IMR-90 (cell line): ENCODE measurements at regions of chrX and their contacts with region 1.

Region 1: DNA sequence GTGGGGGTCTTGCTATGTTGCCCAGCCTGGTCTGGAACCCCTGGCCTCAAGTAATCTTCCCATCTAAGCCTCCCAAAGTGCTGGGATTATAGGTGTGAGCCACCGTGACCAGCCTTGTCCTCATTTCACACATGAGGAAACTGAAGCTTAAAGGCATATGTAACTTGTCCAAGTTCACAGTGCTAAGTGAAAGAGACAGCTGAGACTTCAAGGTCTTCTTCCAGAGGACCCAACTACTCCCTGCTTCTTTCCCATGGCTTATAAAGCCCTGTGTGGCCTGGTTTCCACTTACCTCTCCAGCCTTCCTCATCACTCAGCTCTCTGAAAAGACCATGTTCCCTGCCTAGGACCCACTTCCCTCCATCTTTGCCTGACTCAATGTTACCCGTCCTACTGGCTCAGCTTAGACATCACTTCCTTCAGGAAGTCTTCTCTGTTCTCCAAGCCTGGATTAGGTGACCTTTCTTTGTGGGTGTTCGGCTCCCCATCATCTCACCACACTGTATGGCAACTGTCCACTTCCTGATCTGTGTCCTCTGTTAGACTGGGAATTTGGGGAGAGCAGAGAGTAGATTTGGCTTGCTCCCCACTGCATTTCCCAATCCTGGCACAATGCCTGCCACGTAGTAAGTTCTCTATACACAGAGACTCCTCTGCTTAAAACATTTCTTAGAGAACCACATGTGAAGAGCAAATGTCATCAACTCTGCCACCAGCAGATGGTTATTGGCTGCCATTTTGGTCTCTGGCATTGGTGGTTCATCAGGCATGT is 30.4 kb upstream of the LAMP2 start:
- DNase-seq: peak; percentile 7
- ATAC-seq: no peak
- H3K4me3 ChIP-seq: no peak overlapping the region
- H3K27ac ChIP-seq: no peak overlapping the region
- H3K4me1 ChIP-seq: no peaks in the 10 kb centered on the region
- H3K27me3 ChIP-seq: no peaks in the 10 kb centered on the region
- CTCF ChIP-seq: no peak
- POLR2A ChIP-seq: no peak
- RAD21 ChIP-seq: no peak

Region 2: DNA sequence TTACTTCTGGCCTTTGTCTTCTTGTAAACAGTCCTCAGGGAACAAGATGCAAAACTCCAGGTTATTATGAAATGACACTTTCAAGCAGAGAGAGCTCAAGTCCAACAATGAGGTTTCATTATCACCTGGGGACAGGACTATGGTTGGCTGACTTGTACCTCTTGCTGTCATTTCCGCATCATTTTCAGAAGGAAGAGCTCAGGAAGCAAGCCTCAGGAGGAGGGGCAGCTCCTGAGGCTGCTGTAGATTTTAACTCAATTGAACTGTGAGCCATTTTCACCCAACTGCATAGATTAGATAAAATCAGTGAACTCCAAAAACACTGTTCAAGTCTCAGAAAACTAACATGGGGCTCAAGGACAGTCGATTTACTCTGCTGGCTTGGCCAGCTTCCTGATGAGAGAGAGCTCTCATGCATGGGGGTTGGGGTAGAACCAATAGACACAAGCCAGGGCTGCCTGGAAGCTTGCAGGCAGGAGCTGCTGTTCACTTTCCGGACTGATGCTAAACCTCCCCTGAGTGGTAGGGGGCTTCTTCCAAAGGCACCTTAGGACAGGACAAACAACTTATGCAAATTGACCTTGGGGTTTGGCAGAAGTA is 211.9 kb before region 1 on chrX:
- CTCF ChIA-PET with region 1: no interaction called
- POLR2A ChIA-PET with region 1: no interaction called
- dilution Hi-C with region 1: no loop called
- in situ Hi-C with region 1: no loop called
- intact Hi-C with region 1: no loop called
- DNase-seq: no peak
- ATAC-seq: no peak
- H3K4me3 ChIP-seq: no peak overlapping the region
- H3K27ac ChIP-seq: no peak overlapping the region
- H3K4me1 ChIP-seq: no peaks in the 10 kb centered on the region
- H3K27me3 ChIP-seq: peaks cover 6% of the 10 kb centered on the region
- CTCF ChIP-seq: no peak
- POLR2A ChIP-seq: no peak
- RAD21 ChIP-seq: no peak

Region 3: GRCh38 chrX:120603707-120604360 is 104.3 kb after region 1 on chrX and contains the start of gene MCTS1:
- CTCF ChIA-PET with region 1: no interaction called
- POLR2A ChIA-PET with region 1: no interaction called
- dilution Hi-C with region 1: no loop called
- in situ Hi-C with region 1: no loop called
- intact Hi-C with region 1: loop called (anchors 1 kb)
- DNase-seq: peak; percentile 96
- ATAC-seq: peak; percentile 95
- H3K4me3 ChIP-seq: peak within 1 kb of the TSS; percentile 88
- H3K27ac ChIP-seq: peak within 1 kb of the TSS; percentile 95
- H3K4me1 ChIP-seq: no peaks in the 10 kb centered on the region
- H3K27me3 ChIP-seq: no peaks in the 10 kb centered on the region
- CTCF ChIP-seq: no peak
- POLR2A ChIP-seq: peak; percentile 61; the same call in 1 of the 2 replicates
- RAD21 ChIP-seq: no peak
- total RNA-seq, gene MCTS1: 36.9 and 48.6 TPM in 2 replicates

Region 4: GRCh38 chrX:120664081-120664480 is 164.6 kb after region 1 on chrX:
- CTCF ChIA-PET with region 1: interaction called, 3 read pairs
- POLR2A ChIA-PET with region 1: no interaction called
- dilution Hi-C with region 1: no loop called
- in situ Hi-C with region 1: loop called (anchors 10 kb)
- intact Hi-C with region 1: loop called (anchors 1 kb)
- DNase-seq: peak; percentile 13
- ATAC-seq: no peak
- H3K4me3 ChIP-seq: no peak overlapping the region
- H3K27ac ChIP-seq: no peak overlapping the region
- H3K4me1 ChIP-seq: no peaks in the 10 kb centered on the region
- H3K27me3 ChIP-seq: no peaks in the 10 kb centered on the region
- CTCF ChIP-seq: peak; percentile 40
- POLR2A ChIP-seq: no peak
- RAD21 ChIP-seq: 0 out of 2 replicates have a peak, but pooled peaks have one; percentile 21

Region 5: GRCh38 chrX:120769576-120770341 is 270.3 kb after region 1 on chrX:
- CTCF ChIA-PET with region 1: no interaction called
- POLR2A ChIA-PET with region 1: no interaction called
- dilution Hi-C with region 1: no loop called
- in situ Hi-C with region 1: loop called (anchors 25 kb)
- intact Hi-C with region 1: loop called (anchors 1 kb)
- DNase-seq: peak; percentile 19
- ATAC-seq: no peak
- H3K4me3 ChIP-seq: no peak overlapping the region
- H3K27ac ChIP-seq: no peak overlapping the region
- H3K4me1 ChIP-seq: no peaks in the 10 kb centered on the region
- H3K27me3 ChIP-seq: no peaks in the 10 kb centered on the region
- CTCF ChIP-seq: peak; percentile 31
- POLR2A ChIP-seq: no peak
- RAD21 ChIP-seq: peak; percentile 37

Region 6: DNA sequence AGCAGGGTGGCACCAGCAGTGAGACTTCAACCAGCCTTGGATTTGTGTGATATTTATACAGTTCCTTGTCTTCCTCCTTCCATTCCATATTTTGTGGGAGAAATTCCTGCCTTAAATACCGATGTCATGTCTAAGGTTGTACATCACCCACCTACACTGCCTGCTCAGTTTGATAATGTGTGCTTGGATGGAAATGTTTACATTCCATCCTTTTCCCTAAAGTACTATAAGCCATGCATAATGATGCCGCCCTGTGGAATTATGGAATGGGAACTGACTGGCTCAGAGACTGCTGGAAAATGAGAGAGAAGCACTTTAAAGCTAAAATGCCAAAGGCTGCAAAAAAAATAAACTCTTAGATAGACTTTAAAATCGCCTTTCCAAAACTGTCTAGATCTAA is 536.6 kb after region 1 on chrX:
- CTCF ChIA-PET with region 1: no interaction called
- POLR2A ChIA-PET with region 1: no interaction called
- dilution Hi-C with region 1: no loop called
- in situ Hi-C with region 1: no loop called
- intact Hi-C with region 1: no loop called
- DNase-seq: no peak
- ATAC-seq: no peak
- H3K4me3 ChIP-seq: no peak overlapping the region
- H3K27ac ChIP-seq: no peak overlapping the region
- H3K4me1 ChIP-seq: no peaks in the 10 kb centered on the region
- H3K27me3 ChIP-seq: no peaks in the 10 kb centered on the region
- CTCF ChIP-seq: no peak
- POLR2A ChIP-seq: no peak
- RAD21 ChIP-seq: no peak

Region 7: DNA sequence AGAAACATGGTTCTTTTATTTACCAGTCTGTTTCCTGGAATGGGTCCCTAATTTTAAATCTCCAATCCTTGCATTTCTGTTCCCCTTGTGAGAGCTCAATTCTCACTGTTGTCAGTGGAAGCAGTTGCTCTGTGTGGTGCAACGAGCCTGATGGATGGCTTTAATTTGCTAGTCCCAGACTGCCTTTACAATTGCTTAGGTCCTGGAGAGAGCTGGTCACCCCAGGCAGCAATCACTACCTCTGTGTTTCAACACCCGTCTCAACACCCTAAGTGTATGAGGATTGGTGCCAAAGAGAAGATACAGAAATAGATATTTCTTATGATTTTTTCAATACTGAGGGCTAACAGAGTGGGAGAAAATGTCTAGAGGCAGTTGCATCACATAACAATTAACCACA is 1421.8 kb after region 1 on chrX:
- CTCF ChIA-PET with region 1: no interaction called
- POLR2A ChIA-PET with region 1: no interaction called
- dilution Hi-C with region 1: no loop called
- in situ Hi-C with region 1: no loop called
- intact Hi-C with region 1: no loop called
- DNase-seq: no peak
- ATAC-seq: no peak
- H3K4me3 ChIP-seq: no peak overlapping the region
- H3K27ac ChIP-seq: no peak overlapping the region
- H3K4me1 ChIP-seq: no peaks in the 10 kb centered on the region
- H3K27me3 ChIP-seq: no peaks in the 10 kb centered on the region
- CTCF ChIP-seq: no peak
- POLR2A ChIP-seq: no peak
- RAD21 ChIP-seq: no peak